ENCODE measurements at regions of chr15 and their contacts with region 1.

Region 1: DNA sequence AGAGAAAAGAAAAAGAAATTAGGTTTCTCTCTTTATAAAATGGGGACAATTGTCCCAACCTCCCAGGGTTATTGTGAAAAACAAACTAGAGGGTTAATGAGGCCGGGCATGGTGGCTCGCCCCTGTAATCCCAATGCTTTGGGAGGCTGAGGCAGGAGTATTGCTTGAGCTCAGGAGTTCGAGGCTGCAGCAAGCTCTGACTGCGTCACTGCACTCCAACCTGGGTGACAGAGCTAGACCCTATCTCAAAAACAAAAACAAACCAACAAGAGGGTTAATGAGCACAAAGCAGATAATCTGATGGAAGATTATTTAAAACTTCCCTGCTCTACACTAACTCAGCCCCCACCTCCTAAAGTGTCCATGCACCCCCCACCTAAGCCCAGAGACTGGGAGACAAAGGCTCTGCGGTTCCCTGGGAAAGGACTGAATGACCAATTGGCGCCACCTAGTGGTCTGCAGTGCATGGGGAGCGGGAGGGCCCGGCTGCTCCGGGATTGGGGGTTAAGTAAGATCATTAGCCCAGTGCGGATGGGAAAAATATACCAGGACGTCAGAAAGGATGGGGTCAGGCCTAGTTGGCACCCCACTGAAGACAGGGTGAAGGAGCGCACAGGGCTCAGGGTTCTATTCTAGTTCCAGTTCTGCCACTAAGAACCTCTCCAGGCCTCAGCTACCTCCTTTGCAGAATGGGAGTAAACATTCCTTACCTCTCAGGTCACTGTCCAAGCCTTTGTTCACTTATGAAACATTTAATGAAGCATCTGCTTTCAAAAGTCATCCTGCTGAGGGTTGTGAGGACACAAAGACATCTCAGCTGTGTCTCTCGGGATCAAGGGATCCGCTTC is 15.6 kb downstream of the PIF1 start:
- DNase-seq: peak; percentile 69 to 94 (median 82)

Region 2: GRCh38 chr15:64731012-64731806 is 78.7 kb before region 1 on chr15:
- intact Hi-C with region 1: loop called (anchors 5 kb)
- DNase-seq: peak; percentile 77 to 95 (median 90)

Region 3: DNA sequence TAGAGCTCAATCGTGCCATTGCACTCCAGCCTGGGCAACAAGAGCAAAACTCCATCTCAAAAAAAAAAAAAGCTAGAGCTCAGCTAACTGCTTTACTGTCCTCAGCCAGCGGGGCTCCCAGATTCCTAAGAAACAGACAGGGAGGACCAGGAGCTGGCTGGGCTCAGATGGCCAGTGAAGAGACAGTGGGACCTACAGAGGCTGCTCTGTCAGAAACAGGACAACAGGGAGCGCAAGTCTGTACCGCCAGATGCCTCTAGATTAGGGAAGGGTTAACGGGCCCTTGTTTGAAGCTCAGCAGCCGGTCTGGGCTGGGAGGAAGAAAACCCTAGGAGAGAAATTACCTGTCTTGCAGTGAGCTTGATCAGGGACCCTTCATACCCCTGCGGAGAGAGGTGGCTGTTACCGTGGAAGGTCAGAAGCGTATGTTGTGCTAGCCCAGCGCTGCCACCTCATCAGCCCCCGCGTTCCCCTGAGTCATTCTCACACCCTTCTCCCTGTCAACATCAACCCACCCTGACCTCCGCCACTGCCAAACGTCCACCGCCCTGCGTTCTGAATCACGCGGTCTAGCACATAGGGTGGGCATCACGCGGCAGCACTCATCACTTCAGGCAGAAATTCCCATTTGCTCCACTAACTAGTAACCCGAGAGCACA is 59.7 kb before region 1 on chr15:
- intact Hi-C with region 1: loop called (anchors 10 kb)
- DNase-seq: no peak

Measured in head of caudate nucleus (tissue), 42 donors.